ENCODE measurements at regions of chr14 and their contacts with region 1.

Region 1: DNA sequence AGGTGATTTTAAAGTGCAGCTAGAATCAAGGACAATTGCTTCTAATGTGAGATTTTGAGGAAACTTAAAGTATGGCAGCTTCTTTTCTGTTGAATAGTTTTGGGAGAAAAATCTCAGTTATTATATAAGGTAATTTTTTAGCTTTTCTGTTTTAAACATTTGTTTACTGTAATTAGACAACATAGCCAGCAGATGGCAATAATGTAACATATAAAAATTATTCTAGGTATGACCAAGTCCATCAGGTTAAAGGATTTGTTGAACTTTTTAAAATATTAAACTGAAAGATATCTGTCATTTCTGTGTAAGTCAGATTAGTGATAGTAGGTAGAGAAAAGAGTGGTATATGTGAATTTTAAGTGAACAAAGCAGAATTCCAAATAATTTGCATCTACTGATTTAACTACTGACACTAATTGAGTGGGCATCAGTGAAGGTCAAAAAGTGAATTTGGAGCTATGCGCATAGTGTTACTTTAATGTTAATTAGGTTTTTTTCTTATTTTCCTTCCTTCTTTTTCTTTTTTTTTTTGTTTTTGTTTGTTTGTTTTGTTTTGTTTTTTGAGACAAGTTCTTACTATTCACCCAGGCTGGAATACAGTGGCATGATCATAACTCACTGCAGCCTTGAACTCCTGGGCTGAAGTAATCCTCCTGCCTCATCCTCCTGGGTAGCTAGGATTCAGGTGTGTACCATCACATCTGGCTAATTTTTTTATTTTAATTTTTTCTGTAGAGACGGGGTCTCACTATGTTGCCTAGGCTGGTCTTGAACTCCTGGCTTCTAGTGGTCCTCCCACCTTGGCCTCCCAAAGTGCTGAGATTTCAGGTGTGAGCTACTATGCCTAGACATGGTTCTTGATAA is 18.6 kb downstream of the PRORP start:
- DNase-seq: peak; percentile 52
- H3K4me3 ChIP-seq: no peak overlapping the region
- H3K27ac ChIP-seq: no peak overlapping the region
- H3K4me1 ChIP-seq: no peaks in the 10 kb centered on the region
- H3K27me3 ChIP-seq: no peaks in the 10 kb centered on the region
- CTCF ChIP-seq: peak; percentile 61

Region 2: DNA sequence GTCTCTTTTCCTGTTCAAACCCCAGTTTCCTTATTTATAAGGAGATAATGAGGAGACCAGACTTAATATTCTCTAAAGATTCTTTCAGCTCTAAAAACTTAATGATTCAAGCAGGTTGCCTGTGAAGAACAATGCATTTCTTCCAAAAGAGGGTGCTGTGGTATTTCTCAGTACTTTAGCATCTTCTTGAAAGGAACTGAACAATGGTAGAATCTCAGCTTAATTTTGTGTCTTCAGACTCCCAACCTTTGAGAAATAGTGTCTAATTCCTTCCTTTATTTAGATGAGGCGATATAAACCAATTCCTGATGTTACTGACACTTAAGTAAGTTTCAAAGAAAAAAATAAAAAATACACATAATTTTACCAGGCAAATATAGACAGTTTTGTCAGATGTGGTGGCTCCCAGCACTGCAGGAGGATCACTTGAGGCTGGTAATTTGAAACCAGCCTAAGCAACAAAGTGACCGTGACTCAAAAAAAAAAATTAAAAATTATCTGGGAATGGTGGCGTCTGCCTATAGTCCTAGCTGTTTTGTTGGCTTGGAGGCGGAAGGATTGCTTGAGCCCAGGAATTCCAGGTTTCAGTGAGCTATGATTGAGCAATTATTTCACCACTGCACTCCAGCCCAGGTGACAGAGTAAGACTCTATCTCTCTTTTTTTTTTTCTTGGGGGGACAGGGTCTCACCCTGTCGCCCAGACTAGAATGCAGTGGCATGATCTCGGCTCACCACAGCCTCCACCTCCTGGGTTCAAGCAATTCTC is 74.3 kb after region 1 on chr14:
- CTCF ChIA-PET with region 1: no interaction called
- POLR2A ChIA-PET with region 1: no interaction called
- intact Hi-C with region 1: loop called (anchors 5 kb)
- DNase-seq: peak; percentile 60
- H3K4me3 ChIP-seq: no peak overlapping the region
- H3K27ac ChIP-seq: no peak overlapping the region
- H3K4me1 ChIP-seq: peaks cover 6% of the 10 kb centered on the region
- H3K27me3 ChIP-seq: no peaks in the 10 kb centered on the region
- CTCF ChIP-seq: peak; percentile 61

Region 3: DNA sequence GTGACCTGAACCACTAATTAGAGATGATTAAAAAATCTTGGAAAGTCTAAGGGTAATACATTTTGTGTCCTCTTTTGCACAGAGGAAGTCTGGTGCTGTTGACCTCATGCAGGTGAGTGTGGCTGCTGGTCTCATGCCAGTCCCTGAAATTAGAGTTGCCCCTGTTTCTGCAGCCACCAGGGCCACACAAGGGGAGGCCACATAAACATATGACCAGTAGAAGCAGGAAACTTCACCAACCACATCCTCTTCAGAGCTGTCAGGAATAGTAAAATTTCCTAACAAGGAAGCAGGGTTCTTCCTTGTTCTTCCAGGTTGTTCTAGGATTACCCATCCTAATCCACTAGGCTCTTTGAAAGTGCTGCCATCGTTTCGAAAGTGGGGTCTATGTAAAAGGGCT is 179.5 kb after region 1 on chr14:
- CTCF ChIA-PET with region 1: interaction called, 10 read pairs
- POLR2A ChIA-PET with region 1: no interaction called
- intact Hi-C with region 1: no loop called
- DNase-seq: no peak
- H3K4me3 ChIP-seq: no peak overlapping the region
- H3K27ac ChIP-seq: no peak overlapping the region
- H3K4me1 ChIP-seq: no peaks in the 10 kb centered on the region
- H3K27me3 ChIP-seq: no peaks in the 10 kb centered on the region
- CTCF ChIP-seq: no peak

Region 4: GRCh38 chr14:35687335-35687939 is 546.5 kb after region 1 on chr14:
- CTCF ChIA-PET with region 1: interaction called, 3 read pairs
- POLR2A ChIA-PET with region 1: no interaction called
- intact Hi-C with region 1: loop called (anchors 5 kb)
- DNase-seq: peak; percentile 70
- H3K4me3 ChIP-seq: no peak overlapping the region
- H3K27ac ChIP-seq: no peak overlapping the region
- H3K4me1 ChIP-seq: peaks cover under 1% of the 10 kb centered on the region
- H3K27me3 ChIP-seq: no peaks in the 10 kb centered on the region
- CTCF ChIP-seq: peak; percentile 92

Region 5: DNA sequence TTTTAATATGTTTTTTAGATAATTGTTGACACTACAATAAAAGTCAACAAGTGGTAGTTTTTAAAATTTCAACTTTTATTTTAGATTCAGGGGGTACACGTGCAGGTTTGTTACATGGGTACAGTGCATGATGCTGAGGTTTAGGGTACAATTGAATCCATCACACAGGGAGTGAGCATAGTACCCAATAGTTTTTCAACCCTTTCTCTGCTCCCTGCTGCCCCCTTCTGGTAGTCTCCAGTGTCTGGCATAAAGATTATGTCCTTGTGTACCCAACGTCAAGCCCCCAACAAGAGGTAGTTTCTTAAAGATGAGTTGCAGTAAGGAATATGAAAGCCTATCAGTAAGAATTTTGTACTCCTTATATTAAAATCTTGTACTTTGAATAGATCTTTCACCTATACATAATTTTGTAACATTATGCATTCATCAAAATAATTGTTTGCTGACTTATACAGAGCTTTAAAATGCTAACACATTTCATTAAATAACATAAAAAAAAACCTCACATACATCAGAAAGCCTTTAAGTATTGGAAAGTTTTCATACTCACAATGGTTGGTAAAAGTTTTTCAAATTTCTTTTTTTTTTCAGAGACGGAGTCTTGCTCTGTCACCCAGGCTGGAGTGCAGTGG is 673.5 kb after region 1 on chr14:
- CTCF ChIA-PET with region 1: no interaction called
- POLR2A ChIA-PET with region 1: no interaction called
- intact Hi-C with region 1: loop called (anchors 10 kb)
- DNase-seq: peak; percentile 83
- H3K4me3 ChIP-seq: no peak overlapping the region
- H3K27ac ChIP-seq: no peak overlapping the region
- H3K4me1 ChIP-seq: no peaks in the 10 kb centered on the region
- H3K27me3 ChIP-seq: no peaks in the 10 kb centered on the region
- CTCF ChIP-seq: peak; percentile 80